Activated T-helper 2 cell treated with anti-CD3 and anti-CD28 coated beads, Interferon-gamma antibody, Interleukin-2, Interleukin-4, amounts not matched to agents 10 μg/mL and 5 μg/mL and 100 μg/mL, durations not matched to agents 14 hours and 24 hours and 36 hours (primary cell): ENCODE measurements at regions of chr12 and their contacts with region 1.

Region 1: GRCh38 chr12:56189176-56189917 is at the start of gene SMARCC2:
- DNase-seq: peak; percentile 81
- H3K4me3 Mint-ChIP-seq: peak within 1 kb of the TSS; percentile 98
- H3K27ac Mint-ChIP-seq: peak within 1 kb of the TSS; percentile 98
- H3K4me1 Mint-ChIP-seq: peaks cover 38% of the 10 kb centered on the region
- H3K27me3 Mint-ChIP-seq: no peaks in the 10 kb centered on the region
- total RNA-seq, gene SMARCC2: 131 and 136 TPM in 2 replicates

Region 2: GRCh38 chr12:56127888-56128669 is 61.3 kb before region 1 on chr12 and contains the start of gene ESYT1:
- intact Hi-C with region 1: loop called (anchors 2 kb)
- DNase-seq: peak; percentile 99
- H3K4me3 Mint-ChIP-seq: peak within 1 kb of the TSS; percentile 98
- H3K27ac Mint-ChIP-seq: peak within 1 kb of the TSS; percentile 91
- H3K4me1 Mint-ChIP-seq: peaks cover 52% of the 10 kb centered on the region
- H3K27me3 Mint-ChIP-seq: no peaks in the 10 kb centered on the region
- total RNA-seq, gene ESYT1: 154 TPM in 2 replicates

Region 3: GRCh38 chr12:56158029-56158925 is 31.1 kb before region 1 on chr12 and contains the start of gene MYL6:
- intact Hi-C with region 1: loop called (anchors 2 kb)
- DNase-seq: peak; percentile 92
- H3K4me3 Mint-ChIP-seq: peak within 1 kb of the TSS; percentile 97
- H3K27ac Mint-ChIP-seq: peak within 1 kb of the TSS; percentile 91
- H3K4me1 Mint-ChIP-seq: peaks cover 54% of the 10 kb centered on the region
- H3K27me3 Mint-ChIP-seq: no peaks in the 10 kb centered on the region
- total RNA-seq, gene MYL6: 1,051 and 1,067 TPM in 2 replicates

Region 4: DNA sequence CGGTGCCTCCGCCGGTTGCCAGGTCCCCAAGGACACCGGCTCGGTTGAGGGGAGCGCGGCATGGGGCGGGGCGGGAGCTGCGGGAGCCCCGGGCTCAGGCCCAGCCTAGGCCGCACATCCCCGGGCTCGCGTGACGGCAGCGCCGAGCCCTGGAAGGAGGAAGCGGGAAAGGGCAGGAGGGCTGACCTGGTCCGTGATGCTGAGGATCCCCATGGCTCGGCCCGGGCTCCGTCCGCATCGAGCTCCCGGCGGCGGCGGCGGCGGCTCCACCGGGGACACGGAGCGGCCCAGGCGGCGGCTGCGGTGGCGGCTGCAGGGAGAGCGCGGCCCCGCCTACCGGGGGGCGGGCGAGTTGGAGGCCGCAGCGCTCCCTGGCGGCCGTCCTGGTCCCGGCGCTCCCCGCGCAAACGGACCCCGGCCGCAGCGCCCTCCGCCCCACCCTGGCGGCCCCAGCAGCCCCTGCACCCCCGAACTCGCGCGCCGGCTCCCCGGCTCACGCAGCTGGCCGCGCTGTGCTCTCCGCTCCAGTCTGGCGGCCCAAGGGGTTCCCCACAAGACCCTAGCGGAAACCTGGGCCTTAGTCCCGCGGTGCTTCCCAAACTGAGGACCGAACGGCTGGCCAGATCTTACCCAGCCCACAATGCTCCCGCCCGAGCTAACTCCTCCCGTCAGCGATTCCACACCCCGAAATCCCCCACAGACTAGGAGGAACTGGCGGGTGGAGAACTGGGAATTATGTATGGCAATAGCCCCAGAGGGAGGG is 68.9 kb after region 1 on chr12 and contains the start of gene ANKRD52:
- intact Hi-C with region 1: loop called (anchors 2 kb)
- DNase-seq: peak; percentile 80
- H3K4me3 Mint-ChIP-seq: peak within 1 kb of the TSS; percentile 87
- H3K27ac Mint-ChIP-seq: peak within 1 kb of the TSS; percentile 73
- H3K4me1 Mint-ChIP-seq: peaks cover 11% of the 10 kb centered on the region
- H3K27me3 Mint-ChIP-seq: no peaks in the 10 kb centered on the region
- total RNA-seq, gene ANKRD52: 66.0 and 78.0 TPM in 2 replicates

Region 5: DNA sequence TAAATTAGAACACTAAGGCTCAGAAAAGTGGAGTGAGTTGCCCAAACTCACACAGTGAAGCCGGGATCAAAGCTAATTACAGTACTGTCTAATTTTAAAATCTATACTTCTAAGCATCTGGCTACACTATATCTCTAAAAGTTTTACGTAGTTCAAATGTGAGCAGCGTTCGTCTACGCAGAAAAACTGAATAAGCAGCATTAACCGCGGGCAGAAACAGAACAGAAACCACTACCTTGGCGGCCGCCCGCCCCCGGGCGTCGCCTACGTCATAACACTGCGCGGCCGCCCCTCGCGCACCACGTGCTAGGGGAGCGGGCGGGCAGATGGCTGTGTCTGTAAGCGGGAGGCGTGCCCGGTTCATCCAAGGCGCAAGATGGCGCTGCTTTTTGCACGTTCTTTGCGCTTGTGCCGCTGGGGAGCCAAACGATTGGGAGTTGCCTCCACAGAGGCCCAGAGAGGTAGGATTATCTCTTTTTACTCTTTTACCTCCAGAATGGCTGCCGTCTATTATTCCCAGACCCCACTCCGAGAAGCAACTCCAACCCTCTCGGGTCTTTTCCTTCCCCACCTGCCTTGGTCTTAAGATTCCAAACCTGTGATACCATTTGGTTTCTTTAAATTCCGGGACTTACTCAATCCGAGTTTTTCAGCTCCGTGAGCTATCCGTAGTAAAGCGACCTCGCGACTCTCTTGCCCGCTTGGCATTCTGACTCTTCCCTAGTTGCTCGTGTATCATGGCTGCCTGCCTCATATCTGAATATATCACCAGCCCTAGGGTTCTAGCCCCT is 279.1 kb after region 1 on chr12 and contains the start of gene SPRYD4:
- intact Hi-C with region 1: loop called (anchors 1 kb)
- DNase-seq: peak; percentile 93
- H3K4me3 Mint-ChIP-seq: peak within 1 kb of the TSS; percentile 98
- H3K27ac Mint-ChIP-seq: peak within 1 kb of the TSS; percentile 98
- H3K4me1 Mint-ChIP-seq: peaks cover 18% of the 10 kb centered on the region
- H3K27me3 Mint-ChIP-seq: no peaks in the 10 kb centered on the region
- total RNA-seq, gene SPRYD4: 4.4 and 4.5 TPM in 2 replicates